ENCODE measurements at regions of chr20 and their contacts with region 1.

Region 1: DNA sequence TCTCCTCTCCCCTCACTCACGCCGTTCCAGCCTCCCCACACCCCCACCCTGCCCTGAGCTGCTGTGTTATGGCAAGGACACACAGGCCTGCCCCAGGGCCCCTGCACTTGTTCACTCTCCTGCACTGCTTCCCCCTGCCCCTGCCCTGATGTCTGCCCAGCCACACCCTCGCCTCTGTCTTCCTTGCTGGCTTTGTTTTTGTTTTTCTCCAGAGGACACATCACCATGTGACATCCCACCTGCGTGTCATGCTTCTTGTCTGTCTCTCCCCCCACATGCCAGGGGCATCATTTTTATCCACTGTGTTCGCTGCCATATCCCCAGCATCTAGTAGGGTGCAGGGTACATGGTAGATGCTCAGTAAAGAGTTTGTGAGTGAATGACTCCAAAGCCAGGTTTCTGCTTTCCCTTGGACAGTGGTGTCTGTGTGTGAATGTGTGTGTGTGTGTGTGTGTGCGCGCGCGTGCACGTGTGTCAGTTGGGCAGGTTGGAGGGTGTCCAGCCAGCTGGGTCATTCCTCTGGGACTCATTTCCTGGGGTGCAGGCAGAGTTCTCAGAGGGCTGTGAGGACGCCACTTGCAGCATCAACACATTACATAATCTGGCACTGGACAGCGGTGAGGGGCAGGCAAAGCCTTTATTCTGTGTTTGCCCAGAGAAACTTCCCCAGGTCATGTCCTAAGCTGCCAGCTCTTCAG is 60.6 kb downstream of the STK35 start:
- DNase-seq: no peak
- ATAC-seq: no peak
- H3K4me3 ChIP-seq: no peak overlapping the region
- H3K27ac ChIP-seq: no peak overlapping the region
- H3K4me1 ChIP-seq: no peaks in the 10 kb centered on the region
- H3K27me3 ChIP-seq: peaks cover 0 to 10% of the 10 kb centered on the region in 2 donors
- CTCF ChIP-seq: no peak

Region 2: GRCh38 chr20:2093159-2093781 is 69.0 kb before region 1 on chr20:
- intact Hi-C with region 1: loop called in 1 of 2 experiments (anchors 10 kb)
- DNase-seq: no peak
- ATAC-seq: no peak
- H3K4me3 ChIP-seq: no peak overlapping the region
- H3K27ac ChIP-seq: no peak overlapping the region
- H3K4me1 ChIP-seq: no peaks in the 10 kb centered on the region
- H3K27me3 ChIP-seq: peaks cover 19 to 78% of the 10 kb centered on the region in 2 donors
- CTCF ChIP-seq: peak in 1 of 2 donors; percentile 17

Region 3: GRCh38 chr20:2276015-2276414 is 113.7 kb after region 1 on chr20:
- intact Hi-C with region 1: no loop called
- DNase-seq: no peak
- ATAC-seq: peak; percentile 42
- H3K4me3 ChIP-seq: no peak overlapping the region
- H3K27ac ChIP-seq: no peak overlapping the region
- H3K4me1 ChIP-seq: peaks cover 0 to 11% of the 10 kb centered on the region in 2 donors
- H3K27me3 ChIP-seq: peaks cover 0 to 30% of the 10 kb centered on the region in 2 donors
- CTCF ChIP-seq: no peak